Panc1 (cell line): ENCODE measurements at regions of chr3 and their contacts with region 1.

Region 1: DNA sequence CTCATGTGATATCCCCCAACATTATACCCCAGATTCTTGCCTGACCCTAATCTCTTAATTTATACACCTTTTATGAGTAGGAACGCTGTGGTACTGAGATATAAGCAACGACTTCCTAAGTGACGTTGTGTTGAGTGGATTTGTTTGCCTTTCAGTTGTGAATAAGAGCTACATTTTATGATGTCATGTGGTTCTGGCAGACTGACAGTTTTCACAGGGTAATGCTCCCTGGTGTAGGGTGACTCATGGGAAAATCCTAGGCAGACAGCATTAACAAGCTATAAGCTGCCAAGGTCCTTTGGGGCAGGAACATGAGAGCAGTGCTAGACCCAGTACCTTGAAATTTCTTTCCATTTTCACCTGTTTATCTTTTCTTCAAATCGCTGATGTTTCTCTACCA is 11.2 kb downstream of the C3orf52 start:
- DNase-seq: peak; percentile 99
- ATAC-seq: peak; percentile 97
- H3K4me3 ChIP-seq: no peak overlapping the region
- H3K27ac ChIP-seq: peak overlapping the region; percentile 75
- H3K4me1 ChIP-seq: peaks cover 38% of the 10 kb centered on the region
- H3K27me3 ChIP-seq: no peaks in the 10 kb centered on the region
- CTCF ChIP-seq: no peak

Region 2: DNA sequence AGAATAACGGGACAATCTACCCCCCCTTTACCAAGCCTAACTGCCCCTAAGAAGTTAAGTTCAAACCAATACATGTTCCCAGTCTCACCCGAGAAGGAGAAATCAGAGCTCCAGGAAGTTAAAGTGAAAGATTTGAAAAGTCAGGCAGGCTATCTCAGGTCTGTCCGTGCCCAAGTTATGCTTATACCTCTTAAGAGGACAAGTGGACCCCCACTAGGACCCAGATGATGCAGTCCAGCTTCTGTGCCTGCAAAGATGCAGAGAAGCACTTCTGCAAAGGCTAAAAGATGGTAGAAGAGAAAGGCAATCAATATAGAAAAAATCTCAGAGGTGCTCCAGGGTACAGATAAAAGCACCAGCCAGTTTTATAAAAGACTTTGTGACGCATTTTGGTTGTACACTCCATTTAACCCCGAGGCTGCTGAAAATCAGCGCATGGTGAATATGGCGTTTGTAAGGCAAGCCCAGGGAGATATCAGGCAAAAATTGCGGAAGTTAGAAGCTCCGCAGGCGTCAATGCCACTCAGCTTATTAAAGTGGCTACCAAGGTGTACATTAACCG is 206.5 kb after region 1 on chr3:
- CTCF ChIA-PET with region 1: no interaction called
- POLR2A ChIA-PET with region 1: interaction called, 12 read pairs
- in situ Hi-C with region 1: no loop called
- intact Hi-C with region 1: no loop called
- DNase-seq: no peak
- ATAC-seq: no peak
- H3K4me3 ChIP-seq: peak overlapping the region in 1 of 2 experiments; percentile 23; a peak in 1 of 4 replicates
- H3K27ac ChIP-seq: no peak overlapping the region
- H3K4me1 ChIP-seq: no peaks in the 10 kb centered on the region
- H3K27me3 ChIP-seq: no peaks in the 10 kb centered on the region
- CTCF ChIP-seq: no peak